Uterus (tissue), 4 donors: ENCODE measurements at regions of chr11 and their contacts with region 1.

Region 1: GRCh38 chr11:134215836-134216235 is 7.9 kb downstream of the NCAPD3 start:
- DNase-seq: no peak
- H3K4me3 ChIP-seq: no peak overlapping the region
- H3K27ac ChIP-seq: no peak overlapping the region
- H3K4me1 ChIP-seq: no peaks in the 10 kb centered on the region
- H3K27me3 ChIP-seq: no peaks in the 10 kb centered on the region
- CTCF ChIP-seq: no peak
- POLR2A ChIP-seq: no peak

Region 2: DNA sequence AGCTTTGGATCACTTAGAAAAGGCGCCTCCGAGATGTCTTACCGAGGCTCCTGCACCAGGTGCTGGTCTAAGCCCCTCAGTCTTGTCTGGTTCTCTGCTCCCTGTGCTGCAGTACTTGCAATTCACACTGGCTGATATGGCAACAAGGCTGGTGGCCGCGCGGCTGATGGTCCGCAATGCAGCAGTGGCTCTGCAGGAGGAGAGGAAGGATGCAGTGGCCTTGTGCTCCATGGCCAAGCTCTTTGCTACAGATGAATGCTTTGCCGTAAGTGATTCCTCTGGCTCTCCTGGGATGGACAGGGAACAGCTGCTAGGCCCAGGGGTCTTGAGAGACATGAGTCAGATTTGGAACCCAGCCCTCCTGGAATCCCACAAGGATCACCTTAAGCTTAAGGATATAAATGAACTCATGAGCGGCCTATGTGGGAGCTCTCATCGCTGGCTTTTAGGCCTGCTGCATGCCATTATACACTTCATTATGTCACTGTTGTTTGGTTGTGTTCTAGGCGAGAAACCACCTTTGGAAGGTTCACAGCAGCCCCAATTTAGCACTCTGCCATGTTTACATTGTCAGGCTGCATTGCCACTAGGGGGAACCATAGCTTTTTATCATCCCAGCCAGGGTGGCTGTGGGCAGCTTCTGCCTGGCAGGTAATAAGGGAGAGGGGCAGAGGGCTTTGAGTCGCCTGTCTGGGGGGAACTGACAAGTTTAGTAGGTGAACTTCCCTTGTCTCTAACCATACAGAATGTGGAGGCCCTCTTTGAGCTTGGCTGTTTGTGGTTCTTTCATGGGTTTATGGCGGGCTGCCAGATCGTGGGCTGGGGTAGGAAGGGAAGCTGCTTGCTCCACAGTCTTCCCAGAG is 46.0 kb after region 1 on chr11:
- intact Hi-C with region 1: loop called (anchors 10 kb)
- DNase-seq: no peak
- H3K4me3 ChIP-seq: no peak overlapping the region
- H3K27ac ChIP-seq: no peak overlapping the region
- H3K4me1 ChIP-seq: no peaks in the 10 kb centered on the region
- H3K27me3 ChIP-seq: no peaks in the 10 kb centered on the region
- CTCF ChIP-seq: peak in 1 of 4 experiments; percentile 6
- POLR2A ChIP-seq: no peak

Region 3: DNA sequence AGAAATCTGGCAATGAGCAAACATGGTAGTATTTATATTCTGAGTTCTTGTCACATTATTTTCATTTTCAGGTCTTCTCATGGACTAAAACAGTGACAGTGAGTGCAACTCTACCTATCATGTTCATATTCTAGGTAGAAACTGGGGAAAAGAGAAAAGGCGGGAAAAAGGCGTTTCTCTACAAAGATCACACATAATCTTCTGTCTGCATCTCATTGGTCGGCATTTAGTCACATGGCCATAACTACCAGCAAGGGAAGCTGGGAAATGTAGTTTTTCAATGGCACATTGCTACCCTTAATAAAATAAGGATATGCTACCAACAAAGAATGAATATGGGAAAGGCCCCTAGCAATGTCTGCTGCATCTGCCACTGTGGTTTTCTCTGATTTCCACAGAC is 253.8 kb after region 1 on chr11:
- intact Hi-C with region 1: no loop called
- DNase-seq: no peak
- H3K4me3 ChIP-seq: no peak overlapping the region
- H3K27ac ChIP-seq: no peak overlapping the region
- H3K4me1 ChIP-seq: no peaks in the 10 kb centered on the region
- H3K27me3 ChIP-seq: no peaks in the 10 kb centered on the region
- CTCF ChIP-seq: no peak
- POLR2A ChIP-seq: no peak